Activated CD4-positive, alpha-beta T cell treated with anti-CD3 and anti-CD28 coated beads for 36 hours (primary cell): ENCODE measurements at regions of chr11 and their contacts with region 1.

Region 1: GRCh38 chr11:123357961-123358841 is 71.9 kb upstream of the GRAMD1B start:
- DNase-seq: peak; percentile 71
- ATAC-seq: peak; percentile 77
- H3K4me3 Mint-ChIP-seq: peak overlapping the region; percentile 78
- H3K27ac Mint-ChIP-seq: peak overlapping the region; percentile 74
- H3K4me1 Mint-ChIP-seq: peaks cover 49% of the 10 kb centered on the region
- H3K27me3 Mint-ChIP-seq: peaks cover 38% of the 10 kb centered on the region

Region 2: DNA sequence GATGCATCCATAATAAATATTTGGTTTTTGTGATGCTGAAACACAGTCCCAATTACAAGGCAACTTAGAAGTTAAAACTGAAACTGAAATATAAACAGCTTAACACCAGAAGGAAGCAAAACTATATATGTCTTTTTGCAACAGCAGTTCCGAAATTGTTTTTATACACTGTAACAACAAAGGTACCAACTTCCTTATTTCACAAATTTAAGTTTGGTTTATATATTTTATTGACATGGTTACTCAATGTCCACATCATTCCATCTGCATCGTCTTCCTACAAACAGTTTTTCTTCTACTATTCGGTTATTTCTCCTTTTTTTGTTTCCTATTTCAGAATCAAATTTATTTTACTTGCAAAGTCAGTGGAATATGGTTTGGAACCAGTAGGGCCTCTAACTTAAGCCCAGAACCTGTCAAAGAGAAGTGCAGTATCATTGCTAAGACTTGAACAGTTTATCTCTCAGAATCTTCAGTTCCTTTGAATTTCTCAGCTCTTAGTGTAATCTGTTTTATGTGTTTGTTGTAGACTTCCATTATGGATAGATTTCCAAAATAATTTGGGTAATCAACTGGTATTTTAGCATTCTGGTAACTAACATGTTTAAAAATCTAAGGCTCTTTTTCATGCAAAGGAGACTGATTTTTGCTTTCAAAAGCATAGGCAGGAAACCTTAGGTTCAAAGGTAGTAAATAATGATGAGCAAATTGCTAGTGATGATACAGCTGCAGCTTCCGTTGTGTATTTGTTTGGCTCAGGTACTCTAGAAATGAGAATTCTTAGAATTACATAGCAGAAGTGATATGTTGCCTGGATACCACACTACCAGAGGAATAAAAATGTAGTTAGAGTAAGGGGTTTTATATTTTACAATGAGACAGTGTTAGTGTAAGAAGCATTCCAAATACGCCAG is 288.0 kb before region 1 on chr11:
- CTCF ChIA-PET with region 1: no interaction called
- POLR2A ChIA-PET with region 1: no interaction called
- intact Hi-C with region 1: loop called in 1 of 2 experiments (anchors 1 kb)
- DNase-seq: no peak
- ATAC-seq: peak; percentile 79
- H3K4me3 Mint-ChIP-seq: peak overlapping the region; percentile 77
- H3K27ac Mint-ChIP-seq: peak overlapping the region; percentile 94
- H3K4me1 Mint-ChIP-seq: peaks cover 59% of the 10 kb centered on the region
- H3K27me3 Mint-ChIP-seq: no peaks in the 10 kb centered on the region

Region 3: GRCh38 chr11:123338330-123339005 is 19.7 kb before region 1 on chr11:
- CTCF ChIA-PET with region 1: interaction called, 7 read pairs
- POLR2A ChIA-PET with region 1: no interaction called
- intact Hi-C with region 1: loop called (anchors 1 to 2 kb)
- DNase-seq: peak; percentile 27
- ATAC-seq: peak; percentile 66
- H3K4me3 Mint-ChIP-seq: no peak overlapping the region
- H3K27ac Mint-ChIP-seq: no peak overlapping the region
- H3K4me1 Mint-ChIP-seq: peaks cover 8% of the 10 kb centered on the region
- H3K27me3 Mint-ChIP-seq: peaks cover 17% of the 10 kb centered on the region

Region 4: DNA sequence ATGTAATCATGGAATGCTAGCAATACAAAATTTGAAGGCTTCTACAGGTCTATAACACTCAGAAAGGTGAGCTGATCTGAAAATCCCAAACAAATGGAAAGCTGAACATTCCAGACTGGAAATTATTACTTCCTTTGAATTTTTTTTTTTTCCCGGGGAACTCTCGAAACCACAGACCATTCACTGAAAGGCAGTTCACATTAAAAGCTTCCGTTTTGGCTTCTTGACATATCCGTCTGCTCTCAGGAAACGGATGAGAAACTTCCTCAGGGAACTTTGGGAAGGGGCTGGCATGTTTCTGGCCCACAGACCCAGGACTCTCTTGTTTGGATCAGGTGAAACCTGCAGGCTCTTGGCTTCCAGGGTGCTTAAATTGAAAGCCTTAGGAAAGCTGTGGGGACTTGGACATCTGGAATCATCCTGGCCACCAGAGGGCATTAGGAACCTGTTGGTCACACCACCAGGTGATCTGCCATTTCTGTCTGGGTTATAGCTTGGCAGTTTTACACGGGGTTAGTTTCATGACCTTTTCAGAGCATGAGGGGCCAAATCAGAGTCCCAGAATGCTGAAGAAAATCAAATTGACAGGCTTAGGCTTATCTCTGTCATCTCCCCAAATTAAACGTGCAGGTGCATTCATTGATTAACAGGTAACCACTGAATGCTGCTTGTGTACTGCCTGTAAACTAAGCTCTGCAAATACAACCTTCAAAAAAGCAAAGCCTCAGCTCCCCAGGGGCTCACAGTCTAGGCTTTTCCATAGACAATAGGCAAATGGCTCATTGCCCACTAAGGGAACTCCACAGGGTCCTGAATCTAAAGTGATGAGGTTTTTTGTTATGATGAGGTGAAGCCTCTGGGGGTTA is 49.2 kb after region 1 on chr11:
- CTCF ChIA-PET with region 1: interaction called, 16 read pairs
- POLR2A ChIA-PET with region 1: interaction called, 3 read pairs
- intact Hi-C with region 1: loop called in 1 of 2 experiments (anchors 1 kb)
- DNase-seq: peak; percentile 79
- ATAC-seq: peak; percentile 74
- H3K4me3 Mint-ChIP-seq: peak overlapping the region; percentile 33
- H3K27ac Mint-ChIP-seq: peak overlapping the region; percentile 63
- H3K4me1 Mint-ChIP-seq: peaks cover 26% of the 10 kb centered on the region
- H3K27me3 Mint-ChIP-seq: peaks cover 5% of the 10 kb centered on the region

Region 5: DNA sequence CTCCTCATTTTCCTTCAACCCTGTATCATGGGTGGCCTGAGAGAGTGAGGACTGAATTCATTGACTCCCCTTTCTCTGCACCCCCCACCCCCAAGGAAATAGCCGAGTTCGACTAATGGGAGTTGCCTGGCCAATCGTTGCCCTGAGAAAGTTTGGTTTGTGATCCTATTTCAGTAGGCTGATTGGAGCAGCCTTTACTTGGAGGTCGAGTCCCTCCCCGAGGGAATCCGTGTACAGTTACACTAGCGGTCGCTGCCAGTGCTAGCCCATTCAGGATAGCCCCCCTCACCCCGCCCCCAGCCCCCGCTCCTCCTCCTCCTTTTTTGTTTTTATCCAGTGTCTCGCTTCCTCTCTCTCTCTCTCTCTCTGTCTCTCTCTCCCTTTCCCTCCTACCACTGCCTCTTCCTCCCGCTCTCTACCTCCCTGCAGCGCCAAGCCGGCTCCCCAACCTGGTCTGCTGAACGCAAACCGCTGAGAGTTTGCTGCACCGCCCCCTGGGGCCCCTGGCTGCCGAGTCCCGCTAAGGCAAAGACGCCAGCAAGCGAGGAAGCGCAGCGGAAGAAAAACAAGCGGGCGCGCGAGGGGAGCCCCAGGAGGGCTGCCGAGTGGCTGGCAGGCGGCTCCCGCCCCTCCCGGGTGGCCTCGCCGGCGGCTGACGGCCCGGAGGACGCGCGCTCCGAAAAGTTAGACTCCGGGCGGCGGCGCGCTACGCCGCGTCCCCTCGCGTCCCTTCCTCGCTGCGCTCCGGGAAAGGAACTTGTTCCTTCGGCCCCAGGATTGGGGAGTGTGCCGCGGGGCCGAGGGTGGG is 71.9 kb after region 1 on chr11 and contains the start of gene GRAMD1B:
- CTCF ChIA-PET with region 1: interaction called, 3 read pairs
- POLR2A ChIA-PET with region 1: no interaction called
- intact Hi-C with region 1: loop called (anchors 1 to 5 kb)
- DNase-seq: peak; percentile 90
- ATAC-seq: peak; percentile 68
- H3K4me3 Mint-ChIP-seq: peak within 1 kb of the TSS; percentile 76
- H3K27ac Mint-ChIP-seq: peak within 1 kb of the TSS; percentile 79
- H3K4me1 Mint-ChIP-seq: peaks cover 39% of the 10 kb centered on the region
- H3K27me3 Mint-ChIP-seq: no peaks in the 10 kb centered on the region
- total RNA-seq, gene GRAMD1B: 38.6 to 45.7 TPM

Region 6: GRCh38 chr11:123454060-123454651 is 96.0 kb after region 1 on chr11:
- CTCF ChIA-PET with region 1: interaction called, 3 read pairs
- POLR2A ChIA-PET with region 1: no interaction called
- intact Hi-C with region 1: loop called (anchors 1 to 2 kb)
- DNase-seq: peak; percentile 88
- ATAC-seq: peak; percentile 87
- H3K4me3 Mint-ChIP-seq: peak overlapping the region; percentile 69
- H3K27ac Mint-ChIP-seq: peak overlapping the region; percentile 94
- H3K4me1 Mint-ChIP-seq: peaks cover 78% of the 10 kb centered on the region
- H3K27me3 Mint-ChIP-seq: no peaks in the 10 kb centered on the region